CD4-positive, alpha-beta T cell (primary cell): ENCODE measurements at regions of chr9 and their contacts with region 1.

Region 1: DNA sequence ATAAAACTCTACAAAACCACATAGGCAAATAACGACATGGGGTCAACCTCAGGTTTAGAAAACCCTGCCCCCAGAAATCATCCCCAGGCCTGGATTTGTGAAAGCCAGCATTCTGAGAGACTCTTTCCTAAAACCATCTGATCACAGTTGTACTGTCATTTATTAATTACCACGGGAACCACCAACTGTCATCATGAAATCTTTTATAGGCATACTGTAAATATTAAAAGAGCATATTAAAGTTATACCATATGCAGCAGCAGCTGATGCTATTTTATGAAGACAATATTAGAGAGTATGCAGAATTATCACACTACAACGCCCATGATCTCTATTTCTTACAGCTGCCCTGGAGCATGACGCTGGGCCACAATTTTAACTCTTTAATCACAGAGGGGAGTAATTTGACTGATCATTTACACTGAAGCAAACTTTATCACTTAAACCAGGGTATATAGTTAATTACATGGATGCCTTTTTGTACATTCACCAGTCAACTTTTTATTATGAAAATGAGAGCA is 9.0 kb upstream of the ZDHHC21 start:
- DNase-seq: no peak
- ATAC-seq: no peak
- H3K4me3 ChIP-seq: no peak overlapping the region
- H3K4me3 Mint-ChIP-seq: no peak overlapping the region
- H3K27ac ChIP-seq: no peak overlapping the region
- H3K27ac Mint-ChIP-seq: no peak overlapping the region
- H3K4me1 ChIP-seq: no peaks in the 10 kb centered on the region
- H3K4me1 Mint-ChIP-seq: no peaks in the 10 kb centered on the region
- H3K27me3 ChIP-seq: peaks cover 0 to 6% of the 10 kb centered on the region in 2 experiments
- H3K27me3 Mint-ChIP-seq: peaks cover 18% of the 10 kb centered on the region
- CTCF ChIP-seq: no peak

Region 2: DNA sequence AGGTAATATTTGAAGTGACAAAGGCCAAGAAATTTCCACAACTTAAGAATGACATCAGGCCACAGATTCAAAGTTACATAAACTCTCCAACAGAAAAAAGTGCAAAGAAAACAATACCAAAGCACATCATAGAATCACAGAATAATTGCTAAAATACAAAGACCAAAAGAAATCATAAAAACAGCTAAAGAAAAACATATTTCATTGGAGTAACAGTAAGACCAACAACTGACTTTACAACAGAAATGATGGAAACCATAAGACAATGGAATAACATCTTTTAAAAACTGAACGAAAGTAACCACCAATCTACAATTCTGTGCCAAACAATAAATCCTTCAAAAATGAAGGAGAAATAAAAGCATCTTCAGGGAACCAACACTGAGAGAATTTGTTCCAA is 47.3 kb before region 1 on chr9:
- CTCF ChIA-PET with region 1: no interaction called
- POLR2A ChIA-PET with region 1: no interaction called
- intact Hi-C with region 1: loop called in 1 of 2 experiments (anchors 1 kb)
- DNase-seq: no peak
- ATAC-seq: no peak
- H3K4me3 ChIP-seq: no peak overlapping the region
- H3K4me3 Mint-ChIP-seq: no peak overlapping the region
- H3K27ac ChIP-seq: no peak overlapping the region
- H3K27ac Mint-ChIP-seq: no peak overlapping the region
- H3K4me1 ChIP-seq: no peaks in the 10 kb centered on the region
- H3K4me1 Mint-ChIP-seq: no peaks in the 10 kb centered on the region
- H3K27me3 ChIP-seq: no peaks in the 10 kb centered on the region
- H3K27me3 Mint-ChIP-seq: no peaks in the 10 kb centered on the region
- CTCF ChIP-seq: no peak